ENCODE measurements at regions of chr9 and their contacts with region 1.

Region 1: GRCh38 chr9:109520478-109521132 is 22.5 kb upstream of the PTPN3 start:
- DNase-seq: no peak

Region 2: DNA sequence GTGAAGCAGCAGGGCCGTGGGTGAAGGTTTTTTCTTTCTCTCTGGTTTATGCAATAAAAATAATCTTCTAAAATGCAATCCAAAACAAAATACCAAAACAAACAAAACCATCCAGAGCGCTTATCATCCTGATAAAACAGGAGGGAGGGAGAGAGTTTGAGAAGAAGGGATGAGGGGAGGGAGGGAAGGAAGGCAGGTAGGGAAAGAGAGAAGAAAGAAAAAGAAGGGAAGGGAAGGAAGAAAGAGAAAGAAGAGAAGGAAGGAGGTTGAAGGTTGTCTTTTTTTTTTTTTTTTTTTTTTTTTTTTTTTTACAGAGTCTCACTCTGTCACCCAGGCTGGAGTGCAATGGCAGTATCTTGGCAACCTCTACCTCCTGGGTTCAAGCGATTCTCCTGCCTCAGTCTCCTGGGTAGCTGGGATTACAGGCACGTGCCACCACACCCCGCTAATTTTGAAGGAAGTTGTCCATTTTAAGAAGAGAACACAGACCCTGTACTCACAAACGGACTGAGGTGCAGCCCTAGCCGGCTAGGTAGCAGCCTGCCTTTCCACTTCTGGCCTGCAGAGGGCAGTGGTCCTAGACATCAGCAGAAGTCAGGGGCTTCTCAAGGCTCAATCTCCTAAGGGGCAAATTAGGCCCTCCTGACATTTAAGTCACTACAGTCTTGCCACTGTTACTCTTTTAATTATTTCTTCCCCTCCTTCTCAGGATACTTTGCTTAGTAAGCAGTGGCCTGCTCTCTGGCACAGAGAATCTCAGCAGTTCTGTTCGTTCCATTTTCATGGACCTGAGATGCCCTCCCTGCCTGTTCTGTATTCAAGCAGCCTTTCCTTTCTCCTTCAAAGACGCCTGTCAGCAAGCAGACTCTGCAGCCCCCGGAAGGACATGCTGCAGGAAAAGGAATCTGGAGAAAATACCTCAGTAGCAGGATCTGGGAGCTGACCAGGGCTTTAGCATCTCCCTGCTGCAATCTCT is 276.2 kb before region 1 on chr9:
- intact Hi-C with region 1: loop called (anchors 10 kb)
- DNase-seq: no peak

Region 3: DNA sequence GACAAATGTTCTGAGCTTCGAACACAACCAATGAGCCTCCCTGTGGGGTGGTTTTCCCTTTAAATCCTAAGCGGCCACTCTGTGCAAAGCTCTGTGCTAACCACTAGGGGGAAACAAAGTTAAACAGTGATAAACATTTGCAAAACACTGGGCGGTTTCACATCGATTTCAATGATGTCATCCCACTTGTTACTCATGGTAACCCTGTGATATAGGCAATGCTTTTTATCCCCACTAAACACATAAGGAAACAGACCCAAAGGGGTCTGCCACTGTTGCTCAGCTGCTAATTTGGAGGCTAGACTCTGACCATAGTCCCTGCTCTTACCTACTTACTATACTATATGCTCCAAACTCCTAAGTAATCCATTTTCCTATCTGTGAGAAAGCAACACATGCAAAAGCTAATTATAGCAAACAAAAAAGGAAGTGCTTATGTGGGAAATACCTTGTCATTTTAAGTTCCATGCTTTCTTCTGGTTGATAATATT is 79.8 kb before region 1 on chr9:
- intact Hi-C with region 1: loop called (anchors 2 kb)
- DNase-seq: peak; percentile 38

Region 4: DNA sequence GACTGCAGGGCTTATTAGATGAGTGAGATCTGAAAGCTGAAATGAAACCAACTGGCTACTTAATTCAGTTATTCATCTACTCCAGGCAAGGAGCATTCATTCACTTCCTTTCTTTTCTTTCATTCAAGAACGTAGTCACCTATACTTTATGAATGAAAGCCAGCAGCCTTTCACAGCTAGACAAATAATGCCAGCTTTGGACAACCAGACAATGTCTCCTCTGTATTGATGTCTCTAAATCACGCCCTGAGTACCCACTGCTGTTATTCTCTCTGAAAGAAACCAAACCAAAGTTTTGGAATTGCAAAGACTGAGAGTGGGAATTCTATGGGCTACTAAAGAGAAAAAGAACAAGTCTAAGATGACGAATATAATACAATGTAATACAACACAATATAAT is 98.7 kb after region 1 on chr9:
- intact Hi-C with region 1: no loop called
- DNase-seq: no peak

Measured in cardiac septum (tissue), 1 donor.